Left colon (tissue), 2 donors: ENCODE measurements at regions of chr3 and their contacts with region 1.

Region 1: GRCh38 chr3:35965908-35966307 is 326.6 kb downstream of the ARPP21 start:
- DNase-seq: no peak
- ATAC-seq: no peak

Region 2: DNA sequence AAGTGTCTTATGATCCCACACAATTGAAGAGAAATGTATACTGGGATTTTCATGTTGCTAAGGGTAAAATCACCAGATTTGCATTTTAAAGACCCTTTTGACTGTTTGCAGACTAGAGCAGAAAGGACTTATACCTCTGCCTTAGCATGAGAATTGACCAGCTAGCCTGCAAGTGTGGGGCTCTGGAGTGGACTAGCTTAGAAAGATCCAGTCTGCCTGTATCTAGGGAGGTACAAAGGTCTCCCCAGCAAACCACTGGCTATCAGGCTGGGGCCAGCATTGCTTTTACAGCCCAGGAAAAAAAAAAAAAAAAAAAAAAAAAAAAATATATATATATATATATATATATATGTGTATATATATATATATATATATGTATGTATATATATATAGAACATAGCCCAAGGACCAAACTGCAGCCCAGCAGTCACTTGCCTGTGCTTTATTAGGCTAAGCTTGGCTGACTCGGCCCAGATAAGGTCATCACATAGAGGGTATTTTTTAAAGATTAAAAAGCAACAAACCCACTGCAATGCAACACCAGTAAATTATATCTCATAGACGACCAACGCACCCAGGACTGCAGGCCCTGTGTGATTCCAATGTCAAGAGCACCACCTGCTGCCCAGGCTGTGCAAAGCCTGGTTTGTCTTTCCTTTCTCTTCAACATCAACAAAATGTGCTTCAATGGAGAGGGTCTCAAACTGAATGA is 734.8 kb after region 1 on chr3:
- intact Hi-C with region 1: loop called in 1 of 2 experiments (anchors 2 kb)
- DNase-seq: peak in 1 of 2 donors; percentile 39
- ATAC-seq: peak; percentile 66